Panc1 (cell line): ENCODE measurements at regions of chr19 and their contacts with region 1.

Region 1: DNA sequence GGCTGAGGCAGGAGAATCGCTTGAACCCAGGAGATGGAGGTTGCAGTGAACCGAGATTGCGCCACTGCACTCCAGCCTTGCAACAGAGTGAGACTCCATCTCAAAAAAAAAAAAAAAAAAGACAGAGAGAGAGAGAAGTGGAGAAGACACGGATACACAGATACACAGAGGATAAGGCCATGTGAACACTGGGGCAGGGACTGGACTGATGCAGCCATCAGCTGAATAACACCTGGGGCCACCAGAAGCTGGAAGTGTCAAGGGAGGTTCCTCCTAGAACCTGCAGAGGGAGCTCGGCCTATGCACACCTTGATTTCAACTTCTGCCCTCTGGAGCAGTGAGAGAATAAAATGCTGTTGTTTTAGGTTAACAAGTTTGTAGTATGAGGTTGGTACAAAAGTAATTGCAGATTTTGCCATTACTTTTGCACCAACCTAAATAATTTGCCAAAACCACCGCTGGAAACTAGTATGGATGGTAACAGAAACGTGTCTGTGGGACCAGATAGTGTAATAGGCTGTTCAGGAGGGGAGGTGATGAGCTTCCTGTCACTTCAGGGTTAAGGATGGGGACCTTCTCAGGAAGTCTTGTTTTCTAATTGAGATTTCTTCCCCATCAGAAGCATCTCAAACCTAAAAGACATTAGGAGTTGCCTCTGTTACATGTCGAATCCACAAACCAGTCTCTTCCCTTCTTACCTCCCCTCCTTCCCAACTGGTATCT is 36.4 kb upstream of the IGSF23 start:
- DNase-seq: no peak
- ATAC-seq: peak; percentile 91
- H3K4me3 ChIP-seq: no peak overlapping the region
- H3K27ac ChIP-seq: no peak overlapping the region
- H3K4me1 ChIP-seq: no peaks in the 10 kb centered on the region
- H3K27me3 ChIP-seq: no peaks in the 10 kb centered on the region
- CTCF ChIP-seq: peak; percentile 82

Region 2: GRCh38 chr19:44430956-44431355 is 146.0 kb before region 1 on chr19:
- CTCF ChIA-PET with region 1: interaction called, 10 read pairs
- POLR2A ChIA-PET with region 1: no interaction called
- in situ Hi-C with region 1: no loop called
- intact Hi-C with region 1: no loop called
- DNase-seq: no peak
- ATAC-seq: no peak
- H3K4me3 ChIP-seq: no peak overlapping the region
- H3K27ac ChIP-seq: no peak overlapping the region
- H3K4me1 ChIP-seq: no peaks in the 10 kb centered on the region
- H3K27me3 ChIP-seq: no peaks in the 10 kb centered on the region
- CTCF ChIP-seq: no peak

Region 3: DNA sequence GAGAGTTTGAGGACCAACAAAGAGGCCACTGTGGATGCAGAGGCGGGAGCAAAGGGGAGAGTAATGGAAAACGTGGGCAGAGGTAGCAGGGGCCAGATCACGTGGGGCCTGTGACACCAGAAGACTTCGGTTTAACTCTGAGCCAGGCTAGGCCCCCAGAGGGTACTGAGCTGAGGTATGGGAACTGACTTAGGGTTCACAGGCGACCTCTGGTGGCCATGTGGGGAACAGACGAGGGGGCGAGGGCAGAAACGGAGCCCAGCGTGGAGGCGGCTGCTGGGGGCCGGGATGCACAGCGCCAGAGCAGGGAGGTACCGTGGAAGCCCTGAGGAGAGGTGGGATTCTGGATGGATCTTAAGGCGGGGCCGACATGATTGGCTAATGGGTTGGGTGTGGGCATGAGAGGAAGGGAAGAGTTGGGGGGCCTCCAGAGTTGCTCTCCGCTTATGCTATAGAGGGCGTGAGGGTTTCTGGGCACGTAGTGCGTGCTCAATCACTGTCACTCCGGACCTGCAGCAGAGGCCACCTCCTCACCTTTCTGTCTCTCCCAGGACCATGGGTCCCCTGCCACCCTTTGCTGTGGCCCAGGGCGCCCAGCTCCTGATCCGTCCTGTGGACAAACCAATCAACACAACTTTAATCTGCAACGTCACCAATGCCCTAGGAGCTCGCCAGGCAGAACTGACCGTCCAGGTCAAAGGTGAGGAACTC is 80.4 kb after region 1 on chr19:
- CTCF ChIA-PET with region 1: interaction called, 3 read pairs
- POLR2A ChIA-PET with region 1: no interaction called
- in situ Hi-C with region 1: no loop called
- intact Hi-C with region 1: loop called (anchors 5 kb)
- DNase-seq: no peak
- ATAC-seq: peak; percentile 64
- H3K4me3 ChIP-seq: no peak overlapping the region
- H3K27ac ChIP-seq: no peak overlapping the region
- H3K4me1 ChIP-seq: no peaks in the 10 kb centered on the region
- H3K27me3 ChIP-seq: no peaks in the 10 kb centered on the region
- CTCF ChIP-seq: peak; percentile 86

Region 4: GRCh38 chr19:44694184-44694579 is 117.2 kb after region 1 on chr19:
- CTCF ChIA-PET with region 1: no interaction called
- POLR2A ChIA-PET with region 1: no interaction called
- in situ Hi-C with region 1: no loop called
- intact Hi-C with region 1: no loop called
- DNase-seq: no peak
- ATAC-seq: no peak
- H3K4me3 ChIP-seq: no peak overlapping the region
- H3K27ac ChIP-seq: peak overlapping the region; percentile 52; the same call in 1 of the 2 replicates
- H3K4me1 ChIP-seq: peaks cover 17% of the 10 kb centered on the region
- H3K27me3 ChIP-seq: no peaks in the 10 kb centered on the region
- CTCF ChIP-seq: no peak